ENCODE measurements at regions of chr17 and their contacts with region 1.

Region 1: DNA sequence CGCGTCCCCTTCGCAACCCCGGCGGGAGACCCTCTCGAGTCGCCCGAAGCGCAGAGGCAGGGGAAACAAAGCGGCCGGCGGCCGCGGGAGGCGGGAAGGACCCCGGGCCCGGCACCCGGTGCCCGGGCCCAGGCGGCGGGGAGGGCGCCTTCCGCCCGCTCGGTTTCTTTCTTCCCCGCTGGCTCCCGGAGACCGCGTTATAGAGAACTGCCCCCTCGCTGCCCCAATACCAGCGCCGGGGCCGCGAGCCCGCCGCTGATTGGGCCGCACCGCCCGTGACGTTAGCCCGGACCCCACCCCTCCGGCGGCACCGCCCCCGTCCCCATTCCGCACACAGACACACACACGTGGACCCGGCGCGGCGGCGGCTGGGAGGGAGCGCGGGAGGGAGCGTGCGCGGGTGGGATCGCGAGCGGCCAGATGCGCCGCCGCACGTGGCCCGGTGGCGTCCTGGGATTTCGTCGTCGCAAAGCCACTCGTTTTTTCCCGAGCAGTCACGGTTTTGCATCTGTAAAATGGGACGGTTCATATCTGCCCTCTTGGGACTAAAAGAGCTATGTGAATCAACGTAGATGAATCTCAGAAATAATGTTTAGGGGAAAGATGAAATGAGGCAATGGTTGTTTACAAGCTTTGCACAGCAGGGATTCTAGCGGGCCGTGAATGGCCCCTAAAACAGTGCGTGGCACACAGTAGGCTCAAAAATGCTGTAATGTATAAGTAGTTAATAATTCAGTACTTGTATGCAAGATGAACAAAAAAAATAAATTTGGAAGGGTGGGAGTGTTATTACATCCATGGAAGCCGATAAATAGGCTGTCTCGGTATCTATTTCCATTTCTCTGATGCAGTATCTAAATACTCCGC is at the start of gene EPOP:
- DNase-seq: peak; percentile 94
- H3K4me3 ChIP-seq: peak within 1 kb of the TSS; percentile 65 to 68
- H3K27ac ChIP-seq: peak within 1 kb of the TSS in 1 of 2 donors; percentile 53
- H3K4me1 ChIP-seq: peaks cover 28% of the 10 kb centered on the region
- H3K27me3 ChIP-seq: no peaks in the 10 kb centered on the region
- CTCF ChIP-seq: no peak
- POLR2A ChIP-seq: no peak
- total RNA-seq, gene EPOP: 16.8 to 19.4 TPM

Region 2: DNA sequence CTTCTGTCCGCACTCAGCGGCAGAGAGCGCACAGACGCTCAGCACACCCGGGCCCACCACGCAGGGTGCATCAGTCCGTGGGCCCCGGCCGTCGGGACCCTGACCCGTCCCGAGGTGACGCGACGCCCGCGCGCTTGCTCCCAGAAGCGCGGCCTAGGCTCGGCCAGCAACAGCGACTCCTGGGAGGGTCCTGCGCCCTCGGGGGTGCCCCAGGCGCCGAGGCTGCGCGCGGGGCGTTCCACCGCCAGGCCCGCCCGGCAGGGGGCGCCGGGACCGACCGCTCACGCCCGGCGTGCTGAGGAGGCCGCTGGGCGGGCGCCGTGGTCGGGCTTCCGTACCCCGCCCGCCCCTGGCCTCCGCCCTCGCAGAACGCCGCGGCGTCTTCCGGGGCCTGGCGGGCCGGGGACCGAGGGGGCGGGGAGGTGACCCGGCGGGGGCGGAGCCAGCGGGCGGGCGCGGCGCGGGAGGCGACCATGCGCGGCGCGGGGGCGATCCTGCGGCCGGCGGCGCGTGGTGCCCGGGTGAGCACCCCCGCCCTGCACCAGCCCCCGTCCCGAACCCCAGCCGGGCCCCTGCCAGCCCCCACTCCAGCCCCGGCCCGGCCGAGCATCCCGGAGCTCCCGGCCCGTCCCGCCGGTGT is 55.0 kb after region 1 on chr17 and contains the start of gene CISD3:
- intact Hi-C with region 1: loop called (anchors 5 kb)
- DNase-seq: peak; percentile 84
- H3K4me3 ChIP-seq: peak within 1 kb of the TSS; percentile 74 to 77
- H3K27ac ChIP-seq: peak within 1 kb of the TSS; percentile 81 to 89
- H3K4me1 ChIP-seq: peaks cover 53% of the 10 kb centered on the region
- H3K27me3 ChIP-seq: no peaks in the 10 kb centered on the region
- CTCF ChIP-seq: peak; percentile 70 to 95 (median 92)
- POLR2A ChIP-seq: no peak
- total RNA-seq, gene CISD3: 13.9 to 14.3 TPM